ENCODE measurements at regions of chr9 and their contacts with region 1.

Region 1: DNA sequence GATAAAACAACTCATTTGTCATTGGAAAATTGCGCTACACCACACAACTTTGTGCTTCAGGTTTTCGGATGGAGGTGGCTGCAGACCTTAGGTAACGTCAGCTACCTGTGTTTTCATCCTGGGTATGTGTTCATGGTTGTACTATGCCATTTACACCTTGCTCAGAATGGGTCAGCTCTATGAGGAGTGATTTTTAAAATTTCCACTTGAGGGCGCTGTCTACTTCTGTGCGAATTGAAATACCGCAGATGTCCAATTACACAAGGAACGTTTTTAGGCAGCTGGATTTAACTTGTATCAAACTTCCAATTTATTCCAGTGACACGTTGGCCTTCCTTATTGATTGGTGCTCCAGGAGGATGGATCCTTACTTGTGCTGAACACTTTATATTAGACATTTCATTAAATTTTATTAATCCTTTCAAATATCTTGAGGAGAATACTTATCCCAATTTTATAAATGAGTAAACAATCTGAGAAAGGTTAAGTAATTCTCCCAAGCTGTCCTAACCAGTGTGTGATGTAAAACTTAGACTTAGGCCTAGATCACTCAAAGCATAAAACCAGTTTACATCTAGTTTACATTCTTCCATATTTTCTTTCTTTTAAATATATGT is 23.4 kb downstream of the DMRTA1 start:
- DNase-seq: peak; percentile 32
- ATAC-seq: peak; percentile 95
- H3K4me3 Mint-ChIP-seq: no peak overlapping the region
- H3K27ac Mint-ChIP-seq: no peak overlapping the region
- H3K4me1 Mint-ChIP-seq: peaks cover 14% of the 10 kb centered on the region
- H3K27me3 Mint-ChIP-seq: no peaks in the 10 kb centered on the region
- CTCF ChIP-seq: peak; percentile 67

Region 2: DNA sequence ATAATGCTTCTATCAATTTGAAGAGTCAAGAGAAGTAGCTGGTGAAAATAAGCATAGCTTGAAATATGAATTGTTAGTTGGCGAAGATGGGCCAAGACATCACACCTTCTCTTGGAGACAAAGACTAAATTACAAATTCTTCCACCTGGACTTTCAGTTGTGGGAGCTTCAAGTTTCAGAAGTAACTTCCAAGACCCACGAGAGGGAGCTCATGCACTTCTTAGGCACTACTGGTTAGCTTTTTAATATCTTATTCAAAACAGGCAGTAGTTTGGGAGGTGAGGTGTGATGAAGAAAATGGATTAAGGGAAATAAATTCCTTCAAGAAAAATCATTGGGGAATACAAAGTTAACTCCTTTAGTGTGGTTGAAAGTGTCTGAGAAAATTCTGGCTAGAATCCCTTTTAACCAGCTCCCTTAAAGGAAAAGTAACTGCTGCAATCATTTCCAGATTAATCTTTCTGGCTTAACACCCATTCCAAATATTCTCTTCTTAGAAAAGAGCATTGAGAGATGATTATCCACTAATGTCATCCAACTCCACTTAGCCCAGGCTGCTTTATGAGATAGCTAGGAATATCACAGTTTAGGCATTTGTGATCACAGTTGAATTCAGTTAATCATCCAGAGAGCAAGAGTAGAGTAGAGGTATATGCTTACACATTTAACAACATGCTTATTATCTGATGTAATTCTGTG is 162.9 kb before region 1 on chr9:
- CTCF ChIA-PET with region 1: interaction called, 10 read pairs
- POLR2A ChIA-PET with region 1: no interaction called
- DNase-seq: peak; percentile 13
- ATAC-seq: peak; percentile 63; the same call in 1 of the 2 replicates
- H3K4me3 Mint-ChIP-seq: no peak overlapping the region
- H3K27ac Mint-ChIP-seq: no peak overlapping the region
- H3K4me1 Mint-ChIP-seq: no peaks in the 10 kb centered on the region
- H3K27me3 Mint-ChIP-seq: no peaks in the 10 kb centered on the region; the same call in 1 of the 2 replicates
- CTCF ChIP-seq: peak; percentile 37; the same call in 1 of the 2 replicates

Region 3: GRCh38 chr9:22452415-22453010 is 17.5 kb before region 1 on chr9:
- CTCF ChIA-PET with region 1: interaction called, 11 read pairs
- POLR2A ChIA-PET with region 1: no interaction called
- DNase-seq: peak; percentile 39
- ATAC-seq: peak; percentile 29; the same call in 1 of the 2 replicates
- H3K4me3 Mint-ChIP-seq: no peak overlapping the region
- H3K27ac Mint-ChIP-seq: no peak overlapping the region
- H3K4me1 Mint-ChIP-seq: peaks cover 14% of the 10 kb centered on the region
- H3K27me3 Mint-ChIP-seq: no peaks in the 10 kb centered on the region
- CTCF ChIP-seq: peak; percentile 68; the same call in 1 of the 2 replicates

Region 4: GRCh38 chr9:22481566-22481965 is 11.5 kb after region 1 on chr9:
- CTCF ChIA-PET with region 1: interaction called, 11 read pairs
- POLR2A ChIA-PET with region 1: no interaction called
- DNase-seq: no peak
- ATAC-seq: no peak
- H3K4me3 Mint-ChIP-seq: no peak overlapping the region
- H3K27ac Mint-ChIP-seq: 0 out of 2 replicates have a peak overlapping the region, but pooled peaks have one; percentile 17
- H3K4me1 Mint-ChIP-seq: peaks cover 36% of the 10 kb centered on the region
- H3K27me3 Mint-ChIP-seq: peaks cover 14% of the 10 kb centered on the region
- CTCF ChIP-seq: no peak

Region 5: DNA sequence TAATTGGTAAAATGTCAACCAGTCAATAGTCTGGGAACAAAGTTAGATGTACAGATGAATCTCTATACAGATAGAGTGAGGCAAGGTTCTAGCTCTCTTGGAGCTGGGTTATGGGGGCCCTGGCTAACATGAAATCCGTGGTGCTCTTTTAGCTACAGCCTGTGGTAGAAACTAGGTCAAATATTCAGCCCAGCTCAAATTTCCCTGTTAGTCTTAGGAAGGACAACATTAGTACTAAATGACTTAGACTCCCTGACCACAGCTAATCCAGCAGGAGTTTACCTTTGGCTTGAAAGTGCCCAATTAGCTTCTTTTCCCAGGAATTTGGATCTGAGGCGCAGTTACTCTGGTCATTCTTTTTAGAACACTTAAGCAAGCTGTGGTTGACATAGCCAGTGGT is 147.1 kb after region 1 on chr9:
- CTCF ChIA-PET with region 1: no interaction called
- POLR2A ChIA-PET with region 1: no interaction called
- DNase-seq: no peak
- ATAC-seq: no peak
- H3K4me3 Mint-ChIP-seq: no peak overlapping the region
- H3K27ac Mint-ChIP-seq: no peak overlapping the region
- H3K4me1 Mint-ChIP-seq: no peaks in the 10 kb centered on the region
- H3K27me3 Mint-ChIP-seq: no peaks in the 10 kb centered on the region
- CTCF ChIP-seq: no peak

Region 6: DNA sequence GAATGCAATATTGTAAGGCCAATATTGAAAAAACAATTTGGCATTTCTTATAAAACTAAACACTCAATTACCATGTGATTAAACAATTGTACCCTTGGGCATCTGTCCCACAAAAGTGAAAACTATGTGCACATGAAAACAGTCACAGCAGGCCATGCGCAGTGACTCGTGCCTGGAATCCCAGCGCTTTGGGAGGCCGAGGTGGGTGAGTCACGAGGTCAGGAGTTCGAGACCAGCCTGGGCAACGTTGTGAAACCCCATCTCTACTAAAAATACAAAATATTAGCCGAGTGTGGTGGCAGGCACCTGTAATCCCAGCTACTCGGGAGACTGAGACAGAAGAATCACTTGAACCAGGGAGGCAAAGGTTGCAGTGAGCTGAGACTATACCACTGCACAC is 320.3 kb after region 1 on chr9:
- CTCF ChIA-PET with region 1: no interaction called
- POLR2A ChIA-PET with region 1: no interaction called
- DNase-seq: no peak
- ATAC-seq: no peak
- H3K4me3 Mint-ChIP-seq: no peak overlapping the region
- H3K27ac Mint-ChIP-seq: no peak overlapping the region
- H3K4me1 Mint-ChIP-seq: peaks cover 6% of the 10 kb centered on the region
- H3K27me3 Mint-ChIP-seq: no peaks in the 10 kb centered on the region
- CTCF ChIP-seq: no peak

Region 7: DNA sequence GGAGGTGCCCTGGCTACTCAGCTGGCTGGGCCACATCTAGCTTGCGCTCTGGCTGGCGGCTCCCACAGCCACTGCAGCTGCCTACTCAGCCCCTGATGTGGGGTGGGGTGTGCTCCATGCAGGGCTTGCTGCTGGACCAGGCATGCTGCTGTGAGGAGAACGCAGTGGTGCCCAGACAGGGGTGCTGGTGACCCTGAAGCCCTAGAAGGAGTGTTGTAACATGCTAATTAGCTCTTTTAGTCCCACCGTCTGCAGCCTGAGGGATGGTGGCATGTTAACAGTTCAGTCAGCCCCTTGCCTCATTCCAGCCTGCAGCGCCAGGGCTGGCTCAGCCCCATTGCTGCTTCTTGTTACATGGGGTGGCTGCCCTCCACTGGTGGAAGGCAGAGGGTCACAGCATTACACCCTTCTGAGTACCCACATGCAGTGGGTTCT is 618.9 kb after region 1 on chr9:
- CTCF ChIA-PET with region 1: interaction called, 20 read pairs
- POLR2A ChIA-PET with region 1: no interaction called
- DNase-seq: peak; percentile 76
- ATAC-seq: peak; percentile 100
- H3K4me3 Mint-ChIP-seq: no peak overlapping the region
- H3K27ac Mint-ChIP-seq: peak overlapping the region; percentile 49
- H3K4me1 Mint-ChIP-seq: peaks cover 4% of the 10 kb centered on the region
- H3K27me3 Mint-ChIP-seq: no peaks in the 10 kb centered on the region; the same call in 1 of the 2 replicates
- CTCF ChIP-seq: 0 out of 2 replicates have a peak, but pooled peaks have one; percentile 35